ENCODE measurements at regions of chr7 and their contacts with region 1.

Region 1: DNA sequence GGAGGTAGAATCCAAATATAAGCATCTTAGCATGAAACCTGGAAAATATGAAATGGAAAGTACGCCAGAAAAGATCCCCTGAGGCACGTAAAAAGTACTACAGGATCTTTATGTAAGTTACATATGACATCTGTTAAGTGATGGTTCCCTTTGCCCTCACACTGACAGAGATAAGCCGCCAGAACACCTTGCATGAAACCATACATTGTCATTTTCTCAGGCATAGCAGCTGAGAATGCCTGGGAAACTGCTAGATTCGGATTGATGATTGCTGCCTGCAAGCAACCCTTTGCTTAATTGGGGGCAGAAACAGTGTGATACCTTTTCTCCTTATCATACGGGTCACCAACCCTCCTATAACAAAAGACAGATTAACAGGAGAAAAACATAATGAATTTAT is 826.6 kb upstream of the LRRN3 start:
- DNase-seq: no peak
- ATAC-seq: no peak
- H3K4me3 ChIP-seq: no peak overlapping the region
- H3K4me3 Mint-ChIP-seq: no peak overlapping the region
- H3K27ac ChIP-seq: no peak overlapping the region
- H3K27ac Mint-ChIP-seq: no peak overlapping the region
- H3K4me1 ChIP-seq: no peaks in the 10 kb centered on the region
- H3K4me1 Mint-ChIP-seq: no peaks in the 10 kb centered on the region
- H3K27me3 ChIP-seq: no peaks in the 10 kb centered on the region
- H3K27me3 Mint-ChIP-seq: no peaks in the 10 kb centered on the region
- CTCF ChIP-seq: no peak

Region 2: DNA sequence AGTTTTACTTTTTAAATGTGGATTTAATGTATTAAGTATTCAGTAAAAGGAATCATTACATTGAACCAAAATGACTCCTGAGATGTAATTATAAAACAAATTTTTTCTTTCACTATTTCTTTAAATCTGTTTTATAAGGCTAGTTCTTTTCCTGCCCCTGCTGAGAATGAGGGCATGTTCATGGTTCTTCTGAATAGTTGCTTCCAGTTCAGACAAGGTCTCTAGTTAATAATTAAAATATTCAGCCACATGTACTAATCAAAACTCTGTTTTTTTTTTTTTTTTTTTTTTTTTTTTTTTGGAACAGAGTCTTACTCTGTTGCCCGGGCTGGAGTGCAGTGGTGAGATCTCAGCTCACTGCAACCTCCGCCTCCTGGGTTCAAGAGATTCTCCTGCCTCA is 1373.4 kb before region 1 on chr7:
- CTCF ChIA-PET with region 1: no interaction called
- POLR2A ChIA-PET with region 1: no interaction called
- intact Hi-C with region 1: no loop called
- DNase-seq: no peak
- ATAC-seq: no peak
- H3K4me3 ChIP-seq: no peak overlapping the region
- H3K4me3 Mint-ChIP-seq: no peak overlapping the region
- H3K27ac ChIP-seq: no peak overlapping the region
- H3K27ac Mint-ChIP-seq: no peak overlapping the region
- H3K4me1 ChIP-seq: no peaks in the 10 kb centered on the region
- H3K4me1 Mint-ChIP-seq: no peaks in the 10 kb centered on the region
- H3K27me3 ChIP-seq: no peaks in the 10 kb centered on the region
- H3K27me3 Mint-ChIP-seq: no peaks in the 10 kb centered on the region
- CTCF ChIP-seq: no peak

Region 3: DNA sequence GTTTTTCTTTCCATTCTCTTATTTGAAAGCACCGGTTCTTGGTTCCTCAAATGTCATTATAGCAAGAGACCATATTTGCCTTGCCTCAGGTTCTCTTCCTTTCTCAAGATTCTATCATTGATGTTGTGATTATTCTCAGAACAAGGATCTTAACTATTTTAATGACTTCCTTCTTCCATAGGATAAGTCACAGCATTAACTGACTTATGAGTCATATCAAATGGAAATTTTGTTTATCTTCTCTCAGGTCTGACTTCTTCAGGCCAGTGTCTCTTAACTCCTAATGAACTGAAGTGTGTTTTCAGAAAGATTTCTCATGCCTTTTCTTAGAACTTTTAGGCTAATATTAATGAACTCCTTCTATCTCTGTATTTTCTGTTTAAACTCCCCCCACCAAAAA is 32.0 kb after region 1 on chr7:
- CTCF ChIA-PET with region 1: no interaction called
- POLR2A ChIA-PET with region 1: no interaction called
- intact Hi-C with region 1: loop called in 1 of 2 experiments (anchors 1 kb)
- DNase-seq: no peak
- ATAC-seq: no peak
- H3K4me3 ChIP-seq: no peak overlapping the region
- H3K4me3 Mint-ChIP-seq: no peak overlapping the region
- H3K27ac ChIP-seq: no peak overlapping the region
- H3K27ac Mint-ChIP-seq: no peak overlapping the region
- H3K4me1 ChIP-seq: no peaks in the 10 kb centered on the region
- H3K4me1 Mint-ChIP-seq: no peaks in the 10 kb centered on the region
- H3K27me3 ChIP-seq: no peaks in the 10 kb centered on the region
- H3K27me3 Mint-ChIP-seq: no peaks in the 10 kb centered on the region
- CTCF ChIP-seq: no peak